OCI-LY7 (cell line): ENCODE measurements at regions of chr17 and their contacts with region 1.

Region 1: DNA sequence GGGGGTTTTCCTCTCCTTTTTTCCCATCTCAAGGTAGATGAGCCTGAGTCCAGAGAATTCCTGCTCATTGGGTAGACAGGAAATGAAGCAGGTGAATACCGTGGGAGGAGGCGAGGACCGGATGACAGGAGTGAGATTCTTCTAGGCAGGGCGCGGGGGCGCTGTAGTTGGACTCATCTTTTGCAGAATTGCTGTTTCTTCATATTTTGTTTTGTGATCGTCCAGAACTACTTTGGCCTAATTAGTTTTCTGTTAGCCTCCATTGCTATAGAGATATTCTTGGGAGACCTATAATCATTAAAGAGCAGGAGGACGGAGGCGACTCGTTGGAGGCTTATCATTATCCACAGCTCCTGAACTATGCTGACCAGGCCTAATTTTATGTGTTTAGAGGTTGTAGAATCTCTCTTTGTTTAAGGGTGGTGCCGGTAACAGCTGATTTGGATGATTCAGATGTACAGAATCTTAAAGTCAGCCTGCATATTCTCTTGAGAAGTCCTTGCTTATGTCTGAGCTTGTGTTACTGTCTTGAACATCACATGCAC is 650 bp downstream of the ATP6V0A1 start:
- DNase-seq: peak; percentile 59
- H3K4me3 ChIP-seq: peak overlapping the region; percentile 84
- H3K27ac ChIP-seq: peak overlapping the region; percentile 54
- H3K4me1 ChIP-seq: peaks cover 46% of the 10 kb centered on the region
- CTCF ChIP-seq: peak; percentile 94

Region 2: DNA sequence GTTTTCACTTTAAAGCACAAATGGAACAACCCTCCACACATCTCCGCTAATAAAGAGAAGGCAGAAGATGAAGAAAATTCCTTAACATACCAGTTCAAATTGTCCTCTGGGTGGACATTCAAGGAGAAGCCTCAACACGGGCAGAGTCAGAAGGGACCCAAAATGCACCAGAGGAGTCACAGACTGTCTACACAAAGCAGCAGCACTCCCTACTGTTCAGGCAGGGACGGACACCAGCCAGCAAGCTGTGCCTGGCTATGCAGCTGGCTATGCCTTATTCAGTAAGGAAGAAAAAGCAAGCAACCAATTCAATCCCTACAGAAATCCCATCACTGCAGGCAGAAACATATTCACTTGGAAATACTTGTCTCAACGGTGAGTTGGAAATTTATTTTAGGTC is 450.2 kb before region 1 on chr17:
- CTCF ChIA-PET with region 1: no interaction called
- POLR2A ChIA-PET with region 1: no interaction called
- intact Hi-C with region 1: no loop called
- DNase-seq: peak; percentile 21
- H3K4me3 ChIP-seq: no peak overlapping the region
- H3K27ac ChIP-seq: no peak overlapping the region
- H3K4me1 ChIP-seq: peaks cover 18% of the 10 kb centered on the region
- CTCF ChIP-seq: peak; percentile 56

Region 3: DNA sequence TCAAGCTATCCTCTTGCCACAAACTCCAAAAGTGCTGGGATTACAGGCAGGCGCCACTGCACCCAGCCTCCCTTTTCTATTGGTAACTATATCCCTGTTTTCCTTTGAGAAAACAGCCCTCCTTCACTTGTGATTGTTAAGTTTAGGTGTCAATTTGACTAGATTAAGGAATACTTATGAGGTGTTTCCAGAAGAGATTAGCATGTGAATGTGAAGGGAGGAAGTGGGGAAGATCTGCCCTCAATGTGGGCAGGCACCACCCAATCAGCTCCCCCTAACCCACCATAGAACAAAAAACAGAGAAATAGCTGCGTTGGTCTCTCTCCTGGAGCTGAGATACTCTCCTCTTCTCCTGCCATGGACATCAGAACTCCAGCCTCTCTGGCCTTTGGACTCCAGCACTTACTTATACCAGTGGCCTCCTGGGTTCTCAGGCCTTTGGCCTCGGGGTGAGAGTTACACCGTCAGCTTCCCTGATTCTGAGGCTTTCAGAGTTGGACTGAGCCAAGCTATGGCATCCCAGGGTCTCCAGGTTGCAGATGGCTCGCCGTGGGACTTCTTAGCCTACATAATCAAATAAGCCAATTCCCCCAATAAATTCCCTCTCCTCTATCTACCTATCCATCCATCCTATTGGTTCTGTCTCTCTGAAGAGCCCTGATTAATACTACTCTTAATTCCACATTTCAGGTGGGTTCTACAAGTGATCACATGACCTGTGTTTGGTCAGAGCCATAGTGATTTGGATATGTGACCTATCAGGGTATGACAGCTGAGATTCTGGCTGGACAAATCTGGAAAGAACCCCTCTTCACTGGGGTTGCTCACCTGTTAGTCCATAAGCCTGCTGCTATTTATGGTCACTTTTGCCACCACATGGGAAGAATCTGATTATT is 59.1 kb before region 1 on chr17:
- CTCF ChIA-PET with region 1: no interaction called
- POLR2A ChIA-PET with region 1: no interaction called
- intact Hi-C with region 1: no loop called
- DNase-seq: no peak
- H3K4me3 ChIP-seq: no peak overlapping the region
- H3K27ac ChIP-seq: no peak overlapping the region
- H3K4me1 ChIP-seq: no peaks in the 10 kb centered on the region
- CTCF ChIP-seq: no peak

Region 4: GRCh38 chr17:42438600-42439567 is 20.4 kb before region 1 on chr17:
- CTCF ChIA-PET with region 1: interaction called, 4 read pairs
- POLR2A ChIA-PET with region 1: no interaction called
- intact Hi-C with region 1: loop called (anchors 2 kb)
- DNase-seq: peak; percentile 82
- H3K4me3 ChIP-seq: peak overlapping the region; percentile 4
- H3K27ac ChIP-seq: peak overlapping the region; percentile 35
- H3K4me1 ChIP-seq: peaks cover 34% of the 10 kb centered on the region
- CTCF ChIP-seq: peak; percentile 77